Heart right ventricle (tissue), 16 donors: ENCODE measurements at regions of chr12 and their contacts with region 1.

Region 1: DNA sequence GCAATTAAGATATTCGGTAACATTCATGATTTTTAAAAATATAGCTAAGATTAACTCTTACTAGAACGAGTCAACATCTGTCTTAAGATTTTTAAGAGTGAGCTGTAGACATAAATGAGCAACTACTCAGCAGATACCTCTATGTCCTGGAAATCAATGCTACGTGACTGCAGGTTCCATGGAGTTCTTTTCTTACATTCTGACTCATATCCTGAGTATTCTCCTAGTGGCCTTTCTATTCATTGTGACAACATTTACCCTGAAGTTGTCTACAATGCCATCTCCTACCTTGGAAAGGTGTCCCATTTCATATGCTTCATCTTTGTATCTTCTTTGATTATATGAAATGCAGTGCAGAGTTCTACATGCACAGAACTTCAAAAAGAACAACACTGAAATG is 59.9 kb downstream of the PKP2 start:
- DNase-seq: no peak
- ATAC-seq: peak in 2 of 8 donors; percentile 44 to 47
- H3K4me3 ChIP-seq: no peak overlapping the region
- H3K27ac ChIP-seq: peak overlapping the region in 4 of 10 donors; percentile 4 to 53 (median 30)
- H3K4me1 ChIP-seq: peaks cover 0 to 41% (median 0%) of the 10 kb centered on the region in 9 donors
- H3K27me3 ChIP-seq: no peaks in the 10 kb centered on the region
- CTCF ChIP-seq: no peak

Region 2: DNA sequence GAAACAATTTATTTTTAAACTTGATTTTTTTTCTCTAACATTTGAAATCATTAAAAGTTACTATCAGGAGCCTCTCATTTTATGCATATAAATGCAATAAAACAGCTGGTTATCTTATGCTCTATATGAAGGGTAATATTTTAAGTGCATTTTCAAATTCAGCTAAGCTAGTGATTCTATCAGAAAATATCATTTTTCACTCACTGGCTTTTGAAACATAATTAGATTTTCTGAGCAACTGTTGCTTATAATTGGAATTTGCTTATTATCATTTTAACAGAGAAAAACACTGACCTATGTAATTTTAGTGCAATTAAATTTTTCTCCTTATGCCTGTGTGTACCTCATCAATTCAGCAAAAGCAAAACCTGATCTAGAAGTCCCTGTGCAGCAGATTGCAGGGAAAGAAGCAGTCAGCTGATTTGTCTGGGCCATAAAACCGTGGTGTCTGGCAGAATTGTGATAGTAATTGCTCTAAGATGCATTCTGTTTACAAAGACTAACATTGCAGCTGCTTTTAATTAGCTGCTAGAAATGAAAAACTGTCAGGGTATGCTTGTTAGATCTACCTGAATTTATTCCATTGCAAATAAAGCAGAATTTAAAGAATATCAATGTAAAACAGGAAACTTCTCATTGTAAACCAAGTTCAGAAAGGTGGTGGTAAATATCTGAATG is 655.1 kb before region 1 on chr12:
- intact Hi-C with region 1: loop called in 1 of 10 experiments (anchors 10 kb)
- DNase-seq: no peak
- ATAC-seq: no peak
- H3K4me3 ChIP-seq: no peak overlapping the region
- H3K27ac ChIP-seq: no peak overlapping the region
- H3K4me1 ChIP-seq: peaks cover 0 to 6% (median 0%) of the 10 kb centered on the region in 9 donors
- H3K27me3 ChIP-seq: no peaks in the 10 kb centered on the region
- CTCF ChIP-seq: no peak